Right ventricle myocardium inferior (tissue), 1 donor: ENCODE measurements at regions of chr2 and their contacts with region 1.

Region 1: GRCh38 chr2:112626604-112627059 is 19.1 kb upstream of the SLC20A1 start:
- DNase-seq: peak; percentile 79
- ATAC-seq: peak; percentile 77

Region 2: DNA sequence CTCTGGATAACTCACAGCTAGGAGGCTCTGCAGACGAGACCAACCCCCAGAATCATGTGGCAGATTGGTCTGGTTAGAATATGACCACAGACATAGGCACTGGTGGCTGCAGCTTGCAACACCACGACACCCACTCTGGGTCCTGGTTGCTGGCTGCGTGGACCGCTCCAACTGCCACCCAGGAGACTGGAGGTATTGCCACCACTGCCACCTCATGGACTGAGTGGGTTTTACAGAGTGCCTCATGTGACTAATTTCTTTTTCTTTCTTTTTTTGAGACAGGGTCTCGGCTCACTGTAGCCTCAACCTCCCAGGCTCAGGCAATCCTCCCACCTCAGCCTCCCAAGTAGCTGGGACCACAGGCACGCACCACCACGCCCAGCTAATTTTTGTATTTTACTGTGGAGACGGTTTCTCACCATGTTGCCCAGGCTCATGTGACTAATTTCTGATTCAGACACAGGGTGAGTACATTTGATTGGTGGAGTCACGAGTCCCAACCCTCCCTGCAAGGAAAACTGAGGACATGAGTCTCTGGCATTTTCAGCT is 64.3 kb after region 1 on chr2:
- intact Hi-C with region 1: loop called (anchors 1 kb)
- DNase-seq: peak; percentile 80
- ATAC-seq: peak; percentile 66

Region 3: DNA sequence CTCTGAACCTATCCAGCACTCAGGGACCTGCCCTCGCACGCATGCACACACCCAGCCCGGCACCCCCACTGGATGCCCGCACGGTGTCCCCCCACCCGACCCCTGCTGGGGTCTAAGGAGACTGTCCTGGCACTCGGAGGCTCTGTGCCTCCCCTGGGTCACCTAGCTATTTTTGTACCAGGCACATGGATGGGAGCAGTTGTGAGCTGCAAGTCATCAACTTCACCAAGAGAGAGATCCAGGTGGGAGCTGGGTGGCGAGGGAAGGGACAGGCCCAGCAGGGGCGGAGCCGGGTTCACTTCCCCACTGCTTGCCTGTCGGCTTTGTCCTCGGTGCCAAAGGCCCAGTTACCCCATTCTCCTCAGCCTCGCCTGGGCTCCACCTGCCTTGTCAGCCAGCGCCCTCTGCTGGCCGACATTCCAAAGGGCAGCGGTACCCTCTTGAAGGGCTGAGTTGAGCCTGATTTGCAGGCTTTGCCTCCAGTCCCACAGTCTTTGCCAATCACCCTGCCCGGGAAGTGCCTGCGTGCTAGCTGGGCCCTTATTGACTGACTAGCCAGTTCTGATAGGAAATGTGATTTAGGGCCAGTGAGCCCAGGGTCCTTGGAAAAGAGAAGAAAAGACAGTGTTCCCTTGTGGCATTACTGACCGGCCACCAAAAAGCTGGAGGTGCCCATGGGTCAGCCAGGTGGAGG is 100.0 kb after region 1 on chr2:
- intact Hi-C with region 1: loop called (anchors 1 kb)
- DNase-seq: peak; percentile 96
- ATAC-seq: peak; percentile 92